Dorsolateral prefrontal cortex (tissue), 120 donors: ENCODE measurements at regions of chr11 and their contacts with region 1.

Region 1: GRCh38 chr11:3205261-3206135 is 13.1 kb downstream of the MRGPRG start:
- DNase-seq: peak in 3 of 10 donors; percentile 22 to 35 (median 30)
- H3K4me3 ChIP-seq: no peak overlapping the region
- H3K27ac ChIP-seq: no peak overlapping the region
- H3K27me3 ChIP-seq: peaks cover 0 to 39% (median 30%) of the 10 kb centered on the region in 45 donors
- CTCF ChIP-seq: no peak

Region 2: GRCh38 chr11:2511421-2512369 is 693.8 kb before region 1 on chr11:
- intact Hi-C with region 1: no loop called
- DNase-seq: peak in 7 of 10 donors; percentile 15 to 44 (median 26)
- H3K4me3 ChIP-seq: no peak overlapping the region
- H3K27ac ChIP-seq: peak overlapping the region in 1 of 59 donors; percentile 46
- H3K27me3 ChIP-seq: peaks cover 0 to 20% (median 0%) of the 10 kb centered on the region in 45 donors
- CTCF ChIP-seq: no peak

Region 3: GRCh38 chr11:3104051-3104714 is 101.3 kb before region 1 on chr11:
- intact Hi-C with region 1: loop called in 1 of 2 experiments (anchors 5 kb)
- DNase-seq: peak in 4 of 10 donors; percentile 4 to 28 (median 16)
- H3K4me3 ChIP-seq: no peak overlapping the region
- H3K27ac ChIP-seq: no peak overlapping the region
- H3K27me3 ChIP-seq: no peaks in the 10 kb centered on the region
- CTCF ChIP-seq: no peak